ENCODE measurements at regions of chr10 and their contacts with region 1.

Region 1: DNA sequence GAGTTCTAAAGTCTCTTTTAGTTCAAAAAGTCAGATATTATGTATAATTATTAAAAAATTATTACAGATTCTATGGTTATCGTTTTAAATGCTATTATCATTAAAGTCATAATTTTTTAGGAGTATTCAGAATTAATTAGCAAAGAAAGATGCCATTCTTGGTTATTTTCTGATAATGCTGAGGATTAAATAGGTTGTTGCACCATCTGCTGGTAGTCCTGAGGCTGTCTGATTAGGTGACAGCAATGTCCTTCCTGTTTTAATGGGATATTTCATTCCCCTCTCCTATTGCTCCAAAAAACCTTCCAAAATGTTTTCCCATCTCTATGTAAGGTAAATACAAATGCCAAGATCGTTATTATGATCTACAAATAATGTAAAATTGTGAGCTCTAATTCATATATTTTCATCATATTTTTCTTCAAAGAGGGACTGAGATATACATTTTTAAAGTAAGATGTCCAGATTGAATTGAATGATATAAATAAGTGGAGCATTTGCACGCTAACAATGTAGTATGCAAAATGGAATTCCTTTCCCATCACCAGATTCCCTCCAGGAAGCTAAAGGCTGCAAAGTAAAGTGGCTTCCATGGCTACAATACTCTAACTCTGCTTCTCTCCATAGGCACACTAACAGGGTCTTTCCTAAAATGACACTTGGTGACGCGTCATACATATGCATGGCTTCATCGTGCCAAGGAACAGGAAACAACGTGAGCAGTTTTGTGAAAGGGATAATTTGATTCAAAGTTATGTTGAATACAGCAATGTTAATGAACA is 58.8 kb upstream of the AKR1E2 start:
- DNase-seq: no peak
- ATAC-seq: no peak
- H3K4me3 Mint-ChIP-seq: no peak overlapping the region
- H3K27ac Mint-ChIP-seq: no peak overlapping the region
- H3K4me1 Mint-ChIP-seq: no peaks in the 10 kb centered on the region
- H3K27me3 Mint-ChIP-seq: peaks cover 8% of the 10 kb centered on the region
- CTCF ChIP-seq: no peak

Region 2: DNA sequence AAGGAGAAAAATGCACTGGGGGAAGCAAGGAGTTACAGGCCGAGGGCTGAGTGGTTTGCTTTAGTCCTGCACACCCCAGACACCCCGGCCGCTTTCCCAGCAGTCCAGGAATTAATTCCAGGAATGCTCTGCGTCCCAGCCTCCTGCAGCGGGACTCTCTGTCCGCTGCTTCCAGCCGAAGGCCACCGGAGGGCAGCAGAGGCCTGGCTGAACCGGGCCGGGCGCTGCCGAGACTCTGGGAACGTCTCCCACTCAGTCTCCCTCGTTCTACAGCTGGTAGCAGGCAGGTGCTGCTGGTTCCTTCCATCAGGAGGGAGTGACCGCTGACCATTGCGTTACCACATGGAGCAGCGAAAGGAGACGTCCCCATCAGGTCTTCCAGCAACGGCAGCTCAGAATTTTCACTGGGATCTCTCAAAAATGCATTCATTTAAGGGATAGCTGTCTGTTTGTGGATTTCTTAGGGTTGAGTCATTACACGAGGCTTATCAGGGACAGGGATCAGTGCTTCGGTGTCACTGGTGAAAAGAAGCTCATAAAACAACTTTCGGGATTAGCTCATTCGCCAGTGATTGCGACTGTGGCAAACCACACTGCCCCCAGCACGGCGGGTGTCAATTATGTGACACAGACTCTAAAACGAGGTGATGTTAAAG is 1569.7 kb before region 1 on chr10:
- CTCF ChIA-PET with region 1: interaction called, 28 read pairs
- POLR2A ChIA-PET with region 1: no interaction called
- intact Hi-C with region 1: loop called (anchors 1 kb)
- DNase-seq: peak; percentile 27
- ATAC-seq: no peak
- H3K4me3 Mint-ChIP-seq: no peak overlapping the region
- H3K27ac Mint-ChIP-seq: no peak overlapping the region
- H3K4me1 Mint-ChIP-seq: peaks cover 7% of the 10 kb centered on the region
- H3K27me3 Mint-ChIP-seq: peaks cover 35% of the 10 kb centered on the region
- CTCF ChIP-seq: peak; percentile 17

Region 3: DNA sequence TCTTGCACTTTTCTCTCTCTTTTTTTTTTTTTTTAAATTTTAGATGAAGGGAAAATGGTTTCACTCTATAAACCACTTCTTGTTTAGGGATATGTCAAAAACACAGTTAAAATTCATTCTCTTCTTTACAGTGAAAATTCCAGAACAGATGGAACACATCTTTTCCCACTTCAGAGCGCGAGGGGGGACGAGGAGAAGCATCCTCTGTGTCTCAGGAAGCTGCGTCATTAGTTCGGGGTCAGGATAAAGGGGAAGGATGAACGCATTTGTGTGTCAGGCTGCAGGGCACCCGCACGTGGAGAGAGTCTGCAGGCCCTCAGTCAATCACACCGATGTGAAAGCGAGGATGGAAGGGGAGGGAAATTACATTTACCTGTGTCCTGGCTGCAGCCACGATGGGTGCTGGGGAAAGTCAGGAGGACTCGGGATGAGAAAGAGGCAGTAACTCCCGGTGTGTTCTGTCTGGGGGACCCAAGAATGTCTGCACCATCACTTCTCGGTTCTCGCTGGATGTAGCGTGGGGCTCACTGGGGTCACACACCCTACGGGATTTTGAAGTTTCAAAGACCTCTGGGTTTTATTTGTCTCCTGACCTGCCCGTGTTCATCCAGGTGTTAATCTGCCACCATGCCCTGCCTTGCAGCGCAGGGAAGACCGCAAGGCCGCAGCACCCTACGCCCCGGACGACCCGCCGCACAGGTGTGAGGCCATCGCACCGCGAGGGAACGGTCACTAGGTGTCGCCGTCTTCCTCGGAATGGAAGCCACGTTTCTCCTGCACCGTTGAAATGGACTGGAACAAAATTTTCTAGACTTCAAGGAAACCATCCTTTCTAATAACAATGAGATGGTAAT is 1527.9 kb before region 1 on chr10:
- CTCF ChIA-PET with region 1: interaction called, 6 read pairs
- POLR2A ChIA-PET with region 1: no interaction called
- intact Hi-C with region 1: loop called (anchors 1 kb)
- DNase-seq: peak; percentile 66
- ATAC-seq: peak; percentile 85
- H3K4me3 Mint-ChIP-seq: no peak overlapping the region
- H3K27ac Mint-ChIP-seq: no peak overlapping the region
- H3K4me1 Mint-ChIP-seq: peaks cover 5% of the 10 kb centered on the region
- H3K27me3 Mint-ChIP-seq: peaks cover 6% of the 10 kb centered on the region
- CTCF ChIP-seq: no peak

Region 4: GRCh38 chr10:3735175-3735574 is 1032.0 kb before region 1 on chr10:
- CTCF ChIA-PET with region 1: interaction called, 4 read pairs
- POLR2A ChIA-PET with region 1: no interaction called
- intact Hi-C with region 1: loop called (anchors 2 kb)
- DNase-seq: no peak
- ATAC-seq: peak; percentile 74
- H3K4me3 Mint-ChIP-seq: no peak overlapping the region
- H3K27ac Mint-ChIP-seq: no peak overlapping the region
- H3K4me1 Mint-ChIP-seq: peaks cover 10% of the 10 kb centered on the region
- H3K27me3 Mint-ChIP-seq: no peaks in the 10 kb centered on the region
- CTCF ChIP-seq: no peak

Region 5: DNA sequence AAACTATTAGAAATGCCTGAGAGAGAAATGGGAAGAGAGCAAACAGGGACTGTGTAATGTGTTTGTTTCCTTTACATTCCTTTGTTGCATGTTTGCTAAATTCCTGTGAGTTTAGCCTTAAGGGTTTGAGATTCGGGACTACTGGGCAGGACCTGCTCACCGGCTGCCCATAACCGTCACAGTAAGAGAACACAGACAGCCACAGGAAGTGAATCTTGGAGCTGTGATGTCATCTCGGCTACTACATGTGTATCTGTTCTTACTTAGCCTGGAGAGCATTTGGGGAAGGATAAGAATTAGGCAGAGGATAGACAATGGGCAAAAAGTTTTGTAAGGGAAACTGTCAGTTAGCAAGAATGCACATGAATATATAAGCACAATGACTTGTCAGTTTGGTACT is 497.1 kb before region 1 on chr10:
- CTCF ChIA-PET with region 1: no interaction called
- POLR2A ChIA-PET with region 1: no interaction called
- intact Hi-C with region 1: no loop called
- DNase-seq: no peak
- ATAC-seq: no peak
- H3K4me3 Mint-ChIP-seq: no peak overlapping the region
- H3K27ac Mint-ChIP-seq: no peak overlapping the region
- H3K4me1 Mint-ChIP-seq: peaks cover 16% of the 10 kb centered on the region
- H3K27me3 Mint-ChIP-seq: peaks cover 7% of the 10 kb centered on the region
- CTCF ChIP-seq: no peak

Region 6: GRCh38 chr10:4483811-4484210 is 283.4 kb before region 1 on chr10:
- CTCF ChIA-PET with region 1: no interaction called
- POLR2A ChIA-PET with region 1: no interaction called
- intact Hi-C with region 1: no loop called
- DNase-seq: no peak
- ATAC-seq: no peak
- H3K4me3 Mint-ChIP-seq: no peak overlapping the region
- H3K27ac Mint-ChIP-seq: no peak overlapping the region
- H3K4me1 Mint-ChIP-seq: peaks cover 2% of the 10 kb centered on the region
- H3K27me3 Mint-ChIP-seq: peaks cover 4% of the 10 kb centered on the region
- CTCF ChIP-seq: no peak